Thyroid gland (tissue), 4 donors: ENCODE measurements at regions of chr11 and their contacts with region 1.

Region 1: DNA sequence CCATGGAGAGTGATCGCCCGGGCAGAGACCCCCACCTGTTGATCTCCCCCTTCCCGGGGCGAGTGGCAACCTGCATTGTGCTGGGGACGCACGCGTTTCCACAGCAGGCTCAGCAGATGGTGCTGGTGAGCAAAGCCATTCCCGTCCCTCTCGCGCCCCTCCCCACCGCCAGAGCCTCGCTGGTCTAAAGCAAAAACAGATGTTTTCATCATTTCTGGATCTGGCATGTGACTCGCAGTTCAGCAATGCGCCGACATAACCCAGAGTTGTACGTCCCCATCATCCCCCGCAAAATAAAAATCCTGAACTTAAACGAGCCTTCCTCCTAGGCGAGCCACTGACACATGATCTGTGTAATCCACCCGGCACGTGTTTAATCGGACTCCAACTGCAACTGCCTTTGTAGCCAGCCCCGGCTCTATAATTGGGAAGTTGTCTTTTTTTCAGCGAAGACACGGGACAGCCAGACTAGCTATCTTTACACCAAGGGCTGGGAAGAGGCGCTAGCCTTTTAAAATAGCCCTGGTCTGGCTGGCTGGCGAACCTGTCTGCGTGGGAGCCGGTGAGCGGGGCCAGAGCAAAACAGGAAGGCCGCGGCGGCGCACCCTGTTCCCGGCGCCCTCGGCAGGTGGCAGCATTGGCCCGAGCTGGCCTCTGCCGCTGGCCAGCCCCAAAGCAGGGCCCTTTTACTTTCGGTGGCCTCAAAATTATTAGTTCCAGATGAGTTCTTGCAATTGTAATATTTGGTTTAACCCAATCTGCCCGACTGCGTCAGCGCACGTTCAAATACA is 203.0 kb upstream of the SORL1-AS1 start:
- DNase-seq: peak; percentile 86 to 88
- H3K4me3 ChIP-seq: peak overlapping the region in 1 of 3 donors; percentile 32
- H3K27ac ChIP-seq: peak overlapping the region; percentile 71 to 92 (median 88)
- H3K4me1 ChIP-seq: peaks cover 12 to 16% of the 10 kb centered on the region in 2 donors
- H3K27me3 ChIP-seq: no peaks in the 10 kb centered on the region
- CTCF ChIP-seq: peak; percentile 68 to 98 (median 92)
- POLR2A ChIP-seq: peak in 1 of 2 donors; percentile 33

Region 2: GRCh38 chr11:122101625-122102291 is 446.0 kb after region 1 on chr11:
- intact Hi-C with region 1: loop called (anchors 5 kb)
- DNase-seq: peak; percentile 79 to 81
- H3K4me3 ChIP-seq: peak overlapping the region in 2 of 3 donors; percentile 47
- H3K27ac ChIP-seq: peak overlapping the region; percentile 93 to 94 (median 94)
- H3K4me1 ChIP-seq: peaks cover 0 to 5% of the 10 kb centered on the region in 2 donors
- H3K27me3 ChIP-seq: no peaks in the 10 kb centered on the region
- CTCF ChIP-seq: peak; percentile 15 to 83 (median 68)
- POLR2A ChIP-seq: peak in 1 of 2 donors; percentile 70

Region 3: DNA sequence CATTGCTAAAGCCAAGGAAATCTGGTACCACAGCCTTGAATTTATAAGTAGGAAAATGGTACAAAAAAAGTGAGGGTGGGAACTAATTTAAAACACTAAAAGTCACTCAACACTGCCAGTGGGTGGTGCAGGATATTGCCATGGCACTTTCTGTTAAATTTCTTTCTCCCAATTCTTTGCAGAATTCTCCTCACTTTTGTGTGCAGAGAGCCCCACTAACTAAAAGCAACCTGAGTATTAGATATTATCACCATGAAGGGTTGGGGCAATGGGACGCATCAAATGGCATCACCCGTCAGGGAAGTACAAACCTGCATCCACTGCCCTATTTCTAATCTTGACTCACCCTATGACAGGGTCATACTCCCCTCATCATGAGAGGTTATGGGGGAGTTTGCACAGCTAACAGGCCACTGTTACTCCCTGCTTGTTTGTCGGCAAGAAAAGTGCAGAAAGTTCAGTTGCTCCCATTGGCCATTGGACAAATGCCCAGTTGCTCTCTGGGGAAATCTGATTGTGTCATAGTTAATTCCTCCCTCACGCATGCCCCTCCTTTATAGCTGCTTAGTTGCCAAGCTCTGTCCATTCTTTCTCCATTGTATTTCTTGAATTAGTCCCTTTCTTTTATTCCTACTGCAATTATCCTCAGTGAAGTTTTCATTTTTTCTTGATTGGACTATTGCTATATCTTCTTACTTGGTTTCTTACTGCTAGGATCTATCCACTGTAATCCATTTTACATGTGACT is 554.1 kb after region 1 on chr11:
- intact Hi-C with region 1: loop called (anchors 5 kb)
- DNase-seq: peak; percentile 76 to 78
- H3K4me3 ChIP-seq: no peak overlapping the region
- H3K27ac ChIP-seq: peak overlapping the region; percentile 81 to 93 (median 88)
- H3K4me1 ChIP-seq: peaks cover 44 to 61% of the 10 kb centered on the region in 2 donors
- H3K27me3 ChIP-seq: no peaks in the 10 kb centered on the region
- CTCF ChIP-seq: no peak
- POLR2A ChIP-seq: no peak

Region 4: GRCh38 chr11:122505304-122506006 is 849.7 kb after region 1 on chr11:
- intact Hi-C with region 1: loop called (anchors 5 kb)
- DNase-seq: peak; percentile 80 to 83
- H3K4me3 ChIP-seq: no peak overlapping the region
- H3K27ac ChIP-seq: no peak overlapping the region
- H3K4me1 ChIP-seq: no peaks in the 10 kb centered on the region
- H3K27me3 ChIP-seq: no peaks in the 10 kb centered on the region
- CTCF ChIP-seq: peak; percentile 44 to 91 (median 82)
- POLR2A ChIP-seq: no peak